ENCODE measurements at regions of chr4 and their contacts with region 1.

Region 1: DNA sequence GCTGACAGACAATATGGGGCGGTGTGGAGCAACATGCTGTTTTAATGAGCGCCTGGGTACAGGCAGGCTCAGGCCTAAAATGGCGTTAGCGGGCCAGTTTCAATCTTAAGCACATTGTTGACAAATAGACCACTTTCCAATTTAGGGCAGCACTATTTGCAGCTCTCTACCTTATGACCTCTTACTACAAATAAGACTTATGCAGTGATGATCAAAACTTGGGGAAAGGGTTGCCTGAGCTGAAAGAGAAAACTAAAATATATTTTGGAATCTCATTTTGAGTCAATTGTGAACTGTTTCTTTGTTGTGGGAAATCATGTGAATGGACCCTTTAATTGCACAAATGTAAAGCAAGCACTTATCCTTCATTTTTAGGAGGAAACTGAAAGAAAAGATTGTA is 25.5 kb upstream of the GPAT3 start:
- DNase-seq: no peak
- H3K4me3 Mint-ChIP-seq: no peak overlapping the region
- H3K27ac Mint-ChIP-seq: no peak overlapping the region
- H3K4me1 Mint-ChIP-seq: no peaks in the 10 kb centered on the region
- H3K27me3 Mint-ChIP-seq: no peaks in the 10 kb centered on the region

Region 2: GRCh38 chr4:82601242-82602015 is 909.0 kb before region 1 on chr4:
- CTCF ChIA-PET with region 1: no interaction called
- POLR2A ChIA-PET with region 1: no interaction called
- intact Hi-C with region 1: no loop called
- DNase-seq: no peak
- H3K4me3 Mint-ChIP-seq: no peak overlapping the region
- H3K27ac Mint-ChIP-seq: no peak overlapping the region
- H3K4me1 Mint-ChIP-seq: no peaks in the 10 kb centered on the region
- H3K27me3 Mint-ChIP-seq: peaks cover 4% of the 10 kb centered on the region

Region 3: GRCh38 chr4:83490876-83491450 is 19.5 kb before region 1 on chr4:
- CTCF ChIA-PET with region 1: interaction called, 15 read pairs
- POLR2A ChIA-PET with region 1: no interaction called
- intact Hi-C with region 1: no loop called
- DNase-seq: no peak
- H3K4me3 Mint-ChIP-seq: no peak overlapping the region
- H3K27ac Mint-ChIP-seq: no peak overlapping the region
- H3K4me1 Mint-ChIP-seq: peaks cover 4% of the 10 kb centered on the region
- H3K27me3 Mint-ChIP-seq: no peaks in the 10 kb centered on the region

Region 4: DNA sequence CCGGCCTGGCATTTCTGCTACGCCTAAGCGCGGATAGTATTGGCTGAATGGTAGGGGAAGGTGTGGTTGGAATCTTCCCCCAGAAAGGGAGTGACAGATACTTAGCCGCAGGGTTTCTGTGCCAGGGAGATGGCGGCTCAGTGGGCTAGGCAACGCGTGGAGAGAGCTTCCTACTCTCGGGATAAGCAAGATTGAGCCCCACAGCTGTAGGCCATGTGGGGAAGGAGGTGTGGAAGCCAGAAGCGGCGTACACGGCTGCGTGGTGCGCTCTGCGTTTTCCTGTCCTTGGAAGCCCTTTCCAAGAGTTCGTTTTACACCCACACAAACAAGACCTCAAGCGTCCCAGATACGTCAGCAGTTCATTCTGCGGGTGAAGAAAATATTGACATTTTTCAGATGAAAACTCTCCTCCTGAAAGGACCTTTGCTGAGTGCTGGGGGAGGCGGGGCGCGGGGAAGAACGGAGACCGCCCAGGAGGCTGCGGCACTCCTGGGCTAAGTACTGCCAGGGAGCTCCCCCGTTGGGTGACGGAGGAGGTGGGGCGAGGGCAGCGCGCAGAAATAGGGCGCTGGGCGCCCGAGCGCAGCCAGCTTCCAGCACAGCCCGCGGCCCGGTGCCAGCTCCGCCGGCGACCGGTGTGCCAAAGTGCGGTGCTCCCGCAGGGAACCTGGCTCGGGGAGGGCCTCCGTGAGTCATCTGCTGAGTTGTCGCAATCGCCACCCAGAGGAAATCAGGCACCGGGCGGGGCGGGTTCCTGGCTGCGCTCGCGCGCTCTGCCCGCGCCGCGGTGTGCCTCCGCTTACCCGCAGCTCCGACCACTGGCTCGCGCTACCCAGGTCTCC is 25.3 kb after region 1 on chr4 and contains the start of gene GPAT3:
- CTCF ChIA-PET with region 1: interaction called, 20 read pairs
- POLR2A ChIA-PET with region 1: no interaction called
- intact Hi-C with region 1: no loop called
- DNase-seq: peak; percentile 84
- H3K4me3 Mint-ChIP-seq: peak within 1 kb of the TSS; percentile 83
- H3K27ac Mint-ChIP-seq: peak within 1 kb of the TSS; percentile 44
- H3K4me1 Mint-ChIP-seq: peaks cover 16% of the 10 kb centered on the region
- H3K27me3 Mint-ChIP-seq: peaks cover 12% of the 10 kb centered on the region
- total RNA-seq, gene GPAT3: 4.2 to 7.2 TPM

Region 5: DNA sequence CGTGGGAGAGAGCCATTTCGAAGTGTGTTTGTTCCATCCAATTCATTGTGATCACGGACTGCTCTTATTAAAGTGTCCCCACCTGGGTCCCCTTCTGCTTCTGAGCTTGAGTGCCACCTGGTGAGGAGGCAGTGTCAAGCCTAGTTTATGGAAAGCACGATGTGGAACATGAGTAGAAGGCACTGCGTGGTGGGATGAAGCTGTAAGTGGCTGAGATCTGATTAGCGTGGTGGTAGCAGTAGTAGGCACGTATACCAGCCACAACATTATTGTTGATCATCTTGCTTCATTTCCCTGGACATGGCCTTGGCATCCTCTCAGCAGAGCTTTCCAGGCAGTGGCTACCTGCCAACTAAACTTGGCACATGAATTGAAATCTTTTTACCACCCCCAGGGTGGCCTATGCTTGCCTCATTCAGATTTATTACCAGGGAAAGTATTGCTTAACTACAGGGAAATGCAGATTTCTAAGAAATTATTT is 71.9 kb after region 1 on chr4:
- CTCF ChIA-PET with region 1: interaction called, 22 read pairs
- POLR2A ChIA-PET with region 1: no interaction called
- intact Hi-C with region 1: loop called (anchors 5 kb)
- DNase-seq: no peak
- H3K4me3 Mint-ChIP-seq: no peak overlapping the region
- H3K27ac Mint-ChIP-seq: no peak overlapping the region
- H3K4me1 Mint-ChIP-seq: no peaks in the 10 kb centered on the region
- H3K27me3 Mint-ChIP-seq: no peaks in the 10 kb centered on the region

Region 6: DNA sequence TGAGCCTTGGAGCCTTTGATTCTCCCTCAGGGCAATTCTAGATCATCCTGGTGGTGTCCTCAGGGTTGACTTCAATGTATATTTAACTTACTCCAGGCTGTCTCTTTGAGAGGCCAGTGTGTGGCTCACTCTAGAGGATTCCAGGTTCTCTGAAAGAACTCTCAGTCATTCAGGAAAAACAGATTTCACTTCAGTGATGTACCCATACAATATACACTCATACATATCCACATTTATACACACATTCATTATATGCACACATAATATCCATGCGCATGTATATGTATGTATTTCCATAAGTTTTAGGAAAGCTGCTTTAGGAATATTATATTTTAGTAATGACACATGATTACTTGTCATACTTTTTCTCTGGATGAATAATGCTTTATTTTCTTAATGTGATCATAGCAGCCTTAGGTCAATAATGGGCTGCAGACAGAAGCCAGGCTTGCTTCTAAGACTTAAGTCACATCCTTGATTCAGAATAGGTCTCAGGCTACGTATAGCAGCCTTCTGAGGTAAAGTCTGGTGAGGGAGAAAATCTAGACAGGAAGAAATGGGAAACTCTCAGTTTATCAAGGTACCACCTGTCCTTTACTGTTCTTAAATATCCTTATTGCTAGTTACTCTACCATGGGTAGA is 422.4 kb after region 1 on chr4:
- CTCF ChIA-PET with region 1: no interaction called
- POLR2A ChIA-PET with region 1: no interaction called
- intact Hi-C with region 1: no loop called
- DNase-seq: no peak
- H3K4me3 Mint-ChIP-seq: no peak overlapping the region
- H3K27ac Mint-ChIP-seq: no peak overlapping the region
- H3K4me1 Mint-ChIP-seq: no peaks in the 10 kb centered on the region
- H3K27me3 Mint-ChIP-seq: no peaks in the 10 kb centered on the region